T-cell (primary cell): ENCODE measurements at regions of chr15 and their contacts with region 1.

Region 1: GRCh38 chr15:60585743-60586708 is 107.1 kb upstream of the ICE2 start:
- DNase-seq: peak in 26 of 35 experiments; percentile 27 to 90 (median 54)
- ATAC-seq: peak in 2 of 4 experiments; percentile 28 to 41
- H3K4me3 ChIP-seq: no peak overlapping the region
- H3K4me3 Mint-ChIP-seq: peak overlapping the region; percentile 46 to 78 (median 69)
- H3K27ac ChIP-seq: peak overlapping the region; percentile 87
- H3K27ac Mint-ChIP-seq: peak overlapping the region; percentile 96 to 97
- H3K4me1 ChIP-seq: peaks cover 29 to 72% of the 10 kb centered on the region in 2 experiments
- H3K4me1 Mint-ChIP-seq: peaks cover 88 to 89% (median 88%) of the 10 kb centered on the region in 3 donors
- H3K27me3 ChIP-seq: peaks cover 0 to 4% of the 10 kb centered on the region in 2 experiments
- H3K27me3 Mint-ChIP-seq: no peaks in the 10 kb centered on the region

Region 2: DNA sequence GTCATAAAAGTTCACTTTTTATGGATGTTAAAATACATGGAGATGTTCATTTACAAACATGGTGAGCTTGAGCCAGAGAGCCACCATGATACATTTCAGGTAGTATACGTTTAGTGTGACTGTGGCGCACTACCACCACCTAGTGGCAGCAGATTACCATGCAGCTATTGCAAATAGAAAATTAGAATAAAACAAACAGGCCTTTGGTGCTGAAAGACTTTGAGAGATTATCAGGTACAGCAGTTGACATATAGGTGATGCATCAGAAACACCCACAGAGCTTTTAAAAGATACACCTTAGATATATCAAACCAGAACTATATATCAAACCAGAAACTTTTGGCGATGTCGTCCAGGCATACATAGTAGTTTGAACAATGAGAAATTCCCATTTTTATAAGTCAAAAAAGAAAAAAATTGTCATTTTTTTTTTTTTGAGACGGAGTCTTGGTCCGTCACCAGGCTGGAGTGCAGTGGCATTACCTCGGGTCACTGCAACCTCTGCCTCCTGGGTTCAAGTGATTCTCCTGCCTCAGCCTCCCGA is 65.1 kb before region 1 on chr15:
- CTCF ChIA-PET with region 1: interaction called, 4 to 19 read pairs
- POLR2A ChIA-PET with region 1: interaction called, 3 to 5 read pairs
- DNase-seq: peak; percentile 55 to 90 (median 77)
- ATAC-seq: peak; percentile 75 to 80 (median 80)
- H3K4me3 ChIP-seq: no peak overlapping the region
- H3K4me3 Mint-ChIP-seq: no peak overlapping the region
- H3K27ac ChIP-seq: peak overlapping the region; percentile 52
- H3K27ac Mint-ChIP-seq: peak overlapping the region; percentile 66 to 86
- H3K4me1 ChIP-seq: peaks cover 4 to 10% of the 10 kb centered on the region in 2 experiments
- H3K4me1 Mint-ChIP-seq: peaks cover 52 to 73% (median 67%) of the 10 kb centered on the region in 3 donors
- H3K27me3 ChIP-seq: no peaks in the 10 kb centered on the region
- H3K27me3 Mint-ChIP-seq: no peaks in the 10 kb centered on the region

Region 3: GRCh38 chr15:60541481-60542299 is 44.3 kb before region 1 on chr15:
- CTCF ChIA-PET with region 1: interaction called in 1 of 2 experiments, 18 read pairs
- POLR2A ChIA-PET with region 1: interaction called in 1 of 2 experiments, 11 read pairs
- DNase-seq: peak in 1 of 35 experiments; percentile 38
- ATAC-seq: peak in 1 of 4 experiments; percentile 3
- H3K4me3 ChIP-seq: no peak overlapping the region
- H3K4me3 Mint-ChIP-seq: peak overlapping the region; percentile 6 to 62 (median 26)
- H3K27ac ChIP-seq: peak overlapping the region; percentile 73
- H3K27ac Mint-ChIP-seq: peak overlapping the region; percentile 85 to 86
- H3K4me1 ChIP-seq: peaks cover 34 to 69% of the 10 kb centered on the region in 2 experiments
- H3K4me1 Mint-ChIP-seq: peaks cover 95 to 99% (median 98%) of the 10 kb centered on the region in 3 donors
- H3K27me3 ChIP-seq: no peaks in the 10 kb centered on the region
- H3K27me3 Mint-ChIP-seq: no peaks in the 10 kb centered on the region

Region 4: GRCh38 chr15:60555291-60555690 is 30.7 kb before region 1 on chr15:
- CTCF ChIA-PET with region 1: interaction called in 1 of 2 experiments, 15 read pairs
- POLR2A ChIA-PET with region 1: interaction called in 1 of 2 experiments, 5 read pairs
- DNase-seq: no peak
- ATAC-seq: no peak
- H3K4me3 ChIP-seq: no peak overlapping the region
- H3K4me3 Mint-ChIP-seq: no peak overlapping the region
- H3K27ac ChIP-seq: peak overlapping the region; percentile 73
- H3K27ac Mint-ChIP-seq: peak overlapping the region; percentile 66 to 92
- H3K4me1 ChIP-seq: peaks cover 45 to 51% of the 10 kb centered on the region in 2 experiments
- H3K4me1 Mint-ChIP-seq: peaks cover 89 to 95% (median 95%) of the 10 kb centered on the region in 3 donors
- H3K27me3 ChIP-seq: no peaks in the 10 kb centered on the region
- H3K27me3 Mint-ChIP-seq: no peaks in the 10 kb centered on the region

Region 5: DNA sequence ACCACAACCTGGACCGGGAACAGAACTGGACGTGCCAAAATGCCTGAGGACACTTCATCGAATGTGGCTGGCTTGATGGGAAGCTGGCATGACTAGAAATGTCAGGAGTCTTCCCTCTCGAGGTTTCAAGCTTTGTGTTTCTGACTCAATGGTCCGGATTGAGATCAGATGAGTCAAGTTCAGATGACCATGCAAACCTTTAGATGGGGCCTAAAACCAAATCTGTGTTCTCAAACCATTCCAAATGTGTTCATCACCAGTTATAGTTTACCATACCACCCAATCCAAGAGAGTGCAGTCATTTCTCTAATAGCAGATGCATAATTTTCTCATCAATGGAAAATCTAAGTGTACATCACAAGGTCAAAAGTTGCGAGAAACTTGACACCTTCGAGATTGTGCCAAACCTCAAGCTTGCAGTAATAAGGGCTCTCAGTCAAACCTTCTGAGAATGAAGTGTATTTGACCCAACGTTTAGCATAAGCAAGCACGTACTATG is 274.0 kb after region 1 on chr15:
- CTCF ChIA-PET with region 1: interaction called, 9 to 22 read pairs
- POLR2A ChIA-PET with region 1: interaction called in 1 of 2 experiments, 3 read pairs
- DNase-seq: peak in 1 of 35 experiments; percentile 18
- ATAC-seq: no peak
- H3K4me3 ChIP-seq: no peak overlapping the region
- H3K4me3 Mint-ChIP-seq: no peak overlapping the region
- H3K27ac ChIP-seq: no peak overlapping the region
- H3K27ac Mint-ChIP-seq: no peak overlapping the region
- H3K4me1 ChIP-seq: peaks cover 0 to 9% of the 10 kb centered on the region in 2 experiments
- H3K4me1 Mint-ChIP-seq: peaks cover 31 to 46% (median 35%) of the 10 kb centered on the region in 3 donors
- H3K27me3 ChIP-seq: no peaks in the 10 kb centered on the region
- H3K27me3 Mint-ChIP-seq: no peaks in the 10 kb centered on the region

Region 6: GRCh38 chr15:60916679-60917460 is 330.8 kb after region 1 on chr15:
- CTCF ChIA-PET with region 1: interaction called, 4 to 36 read pairs
- POLR2A ChIA-PET with region 1: interaction called in 1 of 2 experiments, 3 read pairs
- DNase-seq: peak; percentile 73 to 95 (median 87)
- ATAC-seq: peak; percentile 94 to 99 (median 98)
- H3K4me3 ChIP-seq: no peak overlapping the region
- H3K4me3 Mint-ChIP-seq: no peak overlapping the region
- H3K27ac ChIP-seq: peak overlapping the region; percentile 48
- H3K27ac Mint-ChIP-seq: peak overlapping the region; percentile 65 to 69
- H3K4me1 ChIP-seq: peaks cover 3 to 8% of the 10 kb centered on the region in 2 experiments
- H3K4me1 Mint-ChIP-seq: peaks cover 6 to 15% (median 9%) of the 10 kb centered on the region in 3 donors
- H3K27me3 ChIP-seq: peaks cover 0 to 3% of the 10 kb centered on the region in 2 experiments
- H3K27me3 Mint-ChIP-seq: peaks cover 0 to 1% of the 10 kb centered on the region in 2 donors